Colonic mucosa (tissue), 4 donors: ENCODE measurements at regions of chr18 and their contacts with region 1.

Region 1: GRCh38 chr18:3703732-3704176 is 253.8 kb downstream of the TGIF1 start:
- DNase-seq: peak; percentile 76
- H3K4me3 ChIP-seq: no peak overlapping the region
- H3K27ac ChIP-seq: no peak overlapping the region
- H3K4me1 ChIP-seq: no peaks in the 10 kb centered on the region
- H3K27me3 ChIP-seq: no peaks in the 10 kb centered on the region
- CTCF ChIP-seq: peak; percentile 51

Region 2: GRCh38 chr18:3447895-3448837 is 255.6 kb before region 1 on chr18:
- intact Hi-C with region 1: no loop called
- DNase-seq: peak; percentile 96
- H3K4me3 ChIP-seq: peak overlapping the region; percentile 68
- H3K27ac ChIP-seq: peak overlapping the region; percentile 100
- H3K4me1 ChIP-seq: peaks cover 8% of the 10 kb centered on the region
- H3K27me3 ChIP-seq: no peaks in the 10 kb centered on the region
- CTCF ChIP-seq: no peak

Region 3: DNA sequence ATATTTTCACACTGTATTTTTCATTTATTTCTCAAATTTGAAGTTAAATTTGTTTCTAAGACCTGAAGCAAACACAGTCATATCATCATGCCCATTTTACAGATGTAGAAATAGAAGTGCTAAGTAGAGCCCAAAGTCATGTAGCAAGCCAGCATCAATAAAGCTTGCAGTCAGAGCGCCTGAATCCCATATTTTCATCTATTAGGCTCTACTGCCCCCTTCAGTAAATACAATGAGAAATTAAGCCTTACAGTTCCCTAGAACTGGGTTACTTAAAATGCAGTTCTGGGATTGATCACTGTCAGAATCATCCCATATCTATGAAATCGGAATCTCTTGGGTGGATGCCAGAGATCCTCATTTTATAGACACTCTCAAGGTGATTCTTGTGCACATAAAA is 166.1 kb after region 1 on chr18:
- intact Hi-C with region 1: loop called (anchors 5 kb)
- DNase-seq: no peak
- H3K4me3 ChIP-seq: no peak overlapping the region
- H3K27ac ChIP-seq: no peak overlapping the region
- H3K4me1 ChIP-seq: no peaks in the 10 kb centered on the region
- H3K27me3 ChIP-seq: no peaks in the 10 kb centered on the region
- CTCF ChIP-seq: peak; percentile 27

Region 4: GRCh38 chr18:4004183-4004829 is 300.6 kb after region 1 on chr18:
- intact Hi-C with region 1: loop called (anchors 5 kb)
- DNase-seq: no peak
- H3K4me3 ChIP-seq: no peak overlapping the region
- H3K27ac ChIP-seq: no peak overlapping the region
- H3K4me1 ChIP-seq: no peaks in the 10 kb centered on the region
- H3K27me3 ChIP-seq: no peaks in the 10 kb centered on the region
- CTCF ChIP-seq: no peak